Ascending aorta (tissue), 2 donors: ENCODE measurements at regions of chr1 and their contacts with region 1.

Region 1: DNA sequence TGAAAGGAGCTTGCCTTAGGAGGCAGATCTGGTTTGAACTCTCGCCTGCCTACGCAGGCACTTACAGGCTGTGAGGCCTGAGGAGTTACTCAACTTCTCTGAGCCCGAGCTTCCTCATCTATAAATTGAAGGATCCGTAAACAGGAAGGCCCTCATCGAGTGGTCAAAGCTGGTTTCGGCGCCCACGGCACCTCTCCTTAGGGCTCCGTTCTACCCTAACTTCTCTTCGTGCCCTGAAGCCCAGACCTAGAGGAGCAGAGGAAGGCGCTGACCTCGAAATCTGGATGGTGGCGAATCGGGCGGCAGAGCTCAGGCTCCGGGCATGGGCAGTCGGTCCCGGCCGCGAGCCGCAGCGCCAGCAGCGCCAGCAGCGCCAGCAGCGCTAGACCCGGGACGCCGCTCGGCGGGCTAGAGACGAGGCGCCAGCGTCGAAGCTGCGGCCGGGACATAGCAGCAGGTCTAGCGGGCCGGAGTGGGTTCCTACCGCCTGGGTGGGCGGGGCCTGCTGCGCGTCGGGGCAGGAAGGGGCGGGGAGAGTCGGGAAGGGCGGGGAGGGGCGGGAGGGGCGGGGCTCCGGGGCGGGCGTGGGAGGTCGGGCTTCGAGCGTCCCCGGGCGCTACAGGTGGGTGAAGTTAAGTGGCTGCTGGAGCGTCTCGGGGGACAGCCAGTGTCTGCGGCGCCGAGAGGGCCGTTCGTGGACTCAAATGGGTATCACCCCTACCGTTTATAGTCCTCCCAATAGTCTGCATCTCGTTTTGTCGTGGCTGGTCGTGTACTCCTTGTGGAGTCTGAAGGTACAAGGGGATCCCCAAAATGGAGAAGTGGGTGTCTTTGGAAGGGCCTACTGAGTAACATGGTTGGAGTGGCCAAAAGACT is at the start of gene CTBS:
- DNase-seq: peak; percentile 33 to 91
- H3K4me3 ChIP-seq: peak within 1 kb of the TSS; percentile 87 to 89
- H3K27ac ChIP-seq: peak within 1 kb of the TSS; percentile 99 to 100
- H3K4me1 ChIP-seq: peaks cover 3 to 13% of the 10 kb centered on the region in 2 donors
- H3K27me3 ChIP-seq: no peaks in the 10 kb centered on the region
- CTCF ChIP-seq: no peak
- total RNA-seq, gene CTBS: 14.5 TPM

Region 2: GRCh38 chr1:84598846-84599741 is 24.9 kb after region 1 on chr1:
- intact Hi-C with region 1: loop called (anchors 1 kb)
- DNase-seq: no peak
- H3K4me3 ChIP-seq: peak overlapping the region in 1 of 2 donors; percentile 43
- H3K27ac ChIP-seq: peak overlapping the region; percentile 87 to 91
- H3K4me1 ChIP-seq: peaks cover 9 to 18% of the 10 kb centered on the region in 2 donors
- H3K27me3 ChIP-seq: no peaks in the 10 kb centered on the region
- CTCF ChIP-seq: no peak

Region 3: GRCh38 chr1:84611796-84612195 is 37.6 kb after region 1 on chr1:
- intact Hi-C with region 1: no loop called
- DNase-seq: no peak
- H3K4me3 ChIP-seq: no peak overlapping the region
- H3K27ac ChIP-seq: no peak overlapping the region
- H3K4me1 ChIP-seq: no peaks in the 10 kb centered on the region
- H3K27me3 ChIP-seq: no peaks in the 10 kb centered on the region
- CTCF ChIP-seq: no peak

Region 4: GRCh38 chr1:84690397-84691121 is 116.4 kb after region 1 on chr1 and contains the start of gene SSX2IP:
- intact Hi-C with region 1: loop called (anchors 5 kb)
- DNase-seq: peak; percentile 93 to 98
- H3K4me3 ChIP-seq: peak within 1 kb of the TSS; percentile 70 to 93
- H3K27ac ChIP-seq: peak within 1 kb of the TSS; percentile 70 to 80
- H3K4me1 ChIP-seq: peaks cover 0 to 13% of the 10 kb centered on the region in 2 donors
- H3K27me3 ChIP-seq: no peaks in the 10 kb centered on the region
- CTCF ChIP-seq: no peak
- total RNA-seq, gene SSX2IP: 2.3 TPM

Region 5: DNA sequence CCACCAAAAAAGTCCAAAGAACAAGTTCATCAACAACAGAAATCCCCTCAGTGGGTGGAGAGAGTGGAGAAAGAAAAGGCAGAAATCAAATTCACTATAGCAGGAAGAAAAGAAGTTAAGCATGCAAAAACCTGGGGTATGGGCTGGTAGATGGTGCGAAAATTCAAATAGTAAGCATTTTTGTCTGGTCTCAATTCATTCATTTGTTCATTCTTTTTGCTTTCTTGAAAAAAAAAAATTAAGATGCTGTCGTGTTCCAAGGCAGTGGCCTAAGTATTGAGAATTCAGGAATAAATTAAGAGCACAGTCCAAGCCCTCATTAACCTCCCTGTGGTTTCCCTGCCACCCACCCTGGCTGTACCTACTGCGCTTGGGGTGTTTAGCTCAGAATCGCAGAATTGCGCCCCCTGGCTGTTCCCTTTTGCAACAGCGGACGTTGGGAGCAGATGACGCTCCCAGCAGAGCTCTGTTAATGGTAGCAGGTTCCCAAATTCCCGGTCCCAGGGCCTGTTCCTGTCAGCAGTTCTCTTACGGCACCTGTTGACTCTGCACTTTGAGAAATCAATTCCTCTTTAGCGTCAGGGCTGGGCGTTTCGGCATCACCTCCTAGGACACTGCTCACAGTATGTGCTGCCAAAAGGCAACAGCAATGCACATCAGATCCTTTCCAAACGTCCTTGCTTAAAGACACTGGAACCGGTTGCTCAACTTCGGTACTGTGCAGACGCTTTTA is 150.1 kb after region 1 on chr1:
- intact Hi-C with region 1: no loop called
- DNase-seq: no peak
- H3K4me3 ChIP-seq: no peak overlapping the region
- H3K27ac ChIP-seq: no peak overlapping the region
- H3K4me1 ChIP-seq: peaks cover 0 to 17% of the 10 kb centered on the region in 2 donors
- H3K27me3 ChIP-seq: no peaks in the 10 kb centered on the region
- CTCF ChIP-seq: no peak